ENCODE measurements at regions of chr11 and their contacts with region 1.

Region 1: DNA sequence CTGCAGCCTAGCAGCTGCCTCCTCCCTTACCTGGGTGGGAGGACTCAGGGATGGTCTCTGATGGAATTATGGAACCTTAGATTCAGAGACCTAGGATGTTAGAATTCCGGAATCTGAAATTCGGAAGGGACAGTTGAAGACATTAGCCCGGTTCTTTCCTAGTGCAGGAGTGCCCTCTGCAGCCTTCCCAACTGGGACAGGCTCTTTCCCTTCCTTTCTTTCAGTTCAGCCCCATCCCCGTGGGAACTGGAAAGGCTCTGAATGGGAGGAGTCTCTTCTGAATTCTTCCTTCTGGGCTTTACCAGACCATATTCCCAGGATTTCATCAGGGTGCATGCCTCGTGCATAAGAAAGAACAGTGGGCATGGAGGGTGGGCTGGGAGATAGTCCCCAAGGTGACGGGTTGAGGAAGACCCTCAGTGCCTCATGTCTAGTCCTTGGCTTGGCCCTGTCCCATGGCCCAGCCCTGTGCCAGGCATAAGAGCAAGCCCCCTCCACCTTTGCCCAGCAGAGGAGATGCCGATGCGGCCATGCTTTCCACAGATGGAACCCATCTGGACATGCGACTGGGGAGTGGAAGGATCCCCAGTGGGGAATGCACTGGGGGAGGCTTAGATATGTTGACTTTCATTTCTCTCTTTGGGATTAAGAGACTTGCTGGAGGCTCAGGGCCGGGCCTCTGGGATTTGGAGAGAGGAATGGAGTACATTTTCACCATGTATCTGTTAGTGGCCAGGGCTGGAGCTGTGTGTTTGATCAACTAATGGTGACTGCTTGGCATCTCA is 14.4 kb downstream of the DNAJB13 start:
- DNase-seq: peak in 1 of 2 donors; percentile 63
- ATAC-seq: no peak
- H3K4me3 ChIP-seq: no peak overlapping the region
- H3K27ac ChIP-seq: no peak overlapping the region
- H3K4me1 ChIP-seq: no peaks in the 10 kb centered on the region
- H3K27me3 ChIP-seq: no peaks in the 10 kb centered on the region

Region 2: GRCh38 chr11:74024261-74025029 is 59.2 kb after region 1 on chr11:
- intact Hi-C with region 1: loop called in 1 of 2 experiments (anchors 10 kb)
- DNase-seq: peak; percentile 77 to 91
- ATAC-seq: peak; percentile 79
- H3K4me3 ChIP-seq: no peak overlapping the region
- H3K27ac ChIP-seq: no peak overlapping the region
- H3K4me1 ChIP-seq: peaks cover 0 to 2% of the 10 kb centered on the region in 2 donors
- H3K27me3 ChIP-seq: no peaks in the 10 kb centered on the region

Region 3: GRCh38 chr11:74154621-74155281 is 189.5 kb after region 1 on chr11:
- intact Hi-C with region 1: no loop called
- DNase-seq: no peak
- ATAC-seq: no peak
- H3K4me3 ChIP-seq: no peak overlapping the region
- H3K27ac ChIP-seq: no peak overlapping the region
- H3K4me1 ChIP-seq: peaks cover 0 to 4% of the 10 kb centered on the region in 2 donors
- H3K27me3 ChIP-seq: no peaks in the 10 kb centered on the region

Measured in aorta (tissue), 5 donors.